SK-N-SH (cell line): ENCODE measurements at regions of chr9 and their contacts with region 1.

Region 1: DNA sequence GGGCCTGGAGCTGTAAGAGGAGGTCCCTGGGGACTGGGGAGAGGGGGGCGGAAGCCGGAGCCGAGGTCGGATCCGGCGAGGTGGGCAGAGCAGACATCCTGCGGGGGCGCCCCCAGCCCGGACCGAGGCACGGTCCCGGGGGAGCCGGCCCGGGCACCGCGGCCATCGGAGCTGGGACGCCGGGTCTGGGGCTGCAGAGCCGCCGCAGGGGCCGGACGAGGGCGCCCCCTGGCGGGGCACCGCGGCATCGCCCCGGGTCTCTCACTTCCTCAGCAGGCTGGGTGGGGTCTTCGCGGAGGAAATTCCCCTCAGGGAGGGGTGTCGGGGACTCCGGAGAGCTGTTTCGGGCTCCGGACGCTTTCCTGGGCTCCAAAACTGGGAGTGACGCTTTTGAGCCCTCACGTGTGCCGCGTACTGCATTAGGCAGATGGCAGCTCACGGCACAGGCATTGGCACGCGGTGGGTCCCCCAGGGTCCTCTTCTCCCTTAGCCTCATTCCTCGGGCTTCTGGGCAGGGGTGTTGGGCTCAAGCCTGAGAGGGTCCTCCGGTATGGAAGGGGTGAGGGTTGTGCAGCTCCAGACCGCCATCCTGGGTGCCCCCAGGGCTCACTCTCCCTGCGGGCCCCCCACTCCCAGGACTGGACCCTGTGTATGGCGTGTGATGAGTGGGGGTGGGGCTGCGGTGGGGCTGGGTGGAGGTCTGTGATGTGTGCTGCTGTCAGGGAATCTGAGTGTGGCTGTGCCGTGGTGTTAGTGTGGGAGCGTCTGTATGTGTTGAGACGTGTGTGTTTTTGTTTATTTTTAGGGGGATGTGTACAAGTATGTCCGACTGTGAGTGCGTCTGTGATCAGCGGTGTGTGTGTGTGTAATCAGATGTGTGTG is 29.6 kb downstream of the LHX2 start:
- DNase-seq: peak; percentile 93
- H3K4me3 ChIP-seq: peak overlapping the region; percentile 39 to 62
- H3K27ac ChIP-seq: no peak overlapping the region
- H3K4me1 ChIP-seq: peaks cover 0 to 10% of the 10 kb centered on the region in 2 experiments; a peak in 1 of 4 replicates
- H3K27me3 ChIP-seq: peaks cover 34% of the 10 kb centered on the region; the same call in 1 of the 2 replicates
- CTCF ChIP-seq: peak; percentile 93
- EP300 ChIP-seq: no peak
- RAD21 ChIP-seq: peak; percentile 64

Region 2: DNA sequence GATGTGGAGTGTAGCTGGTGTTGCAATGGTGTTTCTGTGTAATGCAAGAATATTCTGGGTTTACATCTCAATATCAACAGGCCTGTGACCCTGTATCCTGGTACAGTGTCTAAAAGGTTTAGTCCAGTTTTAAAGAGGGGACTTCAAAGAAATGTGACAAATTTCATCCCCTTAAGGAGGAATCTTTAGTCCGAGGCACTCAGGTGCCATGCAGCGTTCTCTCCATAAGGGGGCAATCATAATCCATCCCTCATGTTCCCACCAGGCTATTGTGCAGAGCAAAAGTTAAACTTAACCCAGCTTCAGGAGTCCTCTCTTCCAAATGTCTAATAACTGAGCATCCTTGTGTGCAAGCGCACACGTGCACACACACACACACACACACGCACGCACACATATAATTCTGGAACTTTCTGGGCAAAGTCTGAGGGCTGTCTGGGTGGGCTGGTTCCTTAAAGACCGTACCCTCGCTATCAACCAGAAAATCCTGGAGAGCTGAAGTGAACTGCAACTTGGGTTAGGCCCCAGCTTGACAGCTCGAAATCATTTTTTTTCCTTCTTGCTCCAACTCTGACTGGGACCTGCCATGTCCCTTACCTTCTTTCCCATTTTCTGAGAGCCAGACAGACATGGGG is 639.2 kb before region 1 on chr9:
- CTCF ChIA-PET with region 1: interaction called, 23 read pairs
- POLR2A ChIA-PET with region 1: no interaction called
- DNase-seq: peak; percentile 81
- H3K4me3 ChIP-seq: peak overlapping the region in 1 of 2 experiments; percentile 30; a peak in 1 of 4 replicates
- H3K27ac ChIP-seq: no peak overlapping the region
- H3K4me1 ChIP-seq: peaks cover 0 to 6% of the 10 kb centered on the region in 2 experiments; a peak in 1 of 4 replicates
- H3K27me3 ChIP-seq: no peaks in the 10 kb centered on the region
- CTCF ChIP-seq: peak; percentile 78
- EP300 ChIP-seq: no peak
- RAD21 ChIP-seq: peak; percentile 92

Region 3: GRCh38 chr9:123828449-123828848 is 212.7 kb before region 1 on chr9:
- CTCF ChIA-PET with region 1: no interaction called
- POLR2A ChIA-PET with region 1: no interaction called
- DNase-seq: peak; percentile 11
- H3K4me3 ChIP-seq: no peak overlapping the region
- H3K27ac ChIP-seq: no peak overlapping the region
- H3K4me1 ChIP-seq: no peaks in the 10 kb centered on the region
- H3K27me3 ChIP-seq: no peaks in the 10 kb centered on the region
- CTCF ChIP-seq: no peak
- EP300 ChIP-seq: no peak
- RAD21 ChIP-seq: no peak

Region 4: DNA sequence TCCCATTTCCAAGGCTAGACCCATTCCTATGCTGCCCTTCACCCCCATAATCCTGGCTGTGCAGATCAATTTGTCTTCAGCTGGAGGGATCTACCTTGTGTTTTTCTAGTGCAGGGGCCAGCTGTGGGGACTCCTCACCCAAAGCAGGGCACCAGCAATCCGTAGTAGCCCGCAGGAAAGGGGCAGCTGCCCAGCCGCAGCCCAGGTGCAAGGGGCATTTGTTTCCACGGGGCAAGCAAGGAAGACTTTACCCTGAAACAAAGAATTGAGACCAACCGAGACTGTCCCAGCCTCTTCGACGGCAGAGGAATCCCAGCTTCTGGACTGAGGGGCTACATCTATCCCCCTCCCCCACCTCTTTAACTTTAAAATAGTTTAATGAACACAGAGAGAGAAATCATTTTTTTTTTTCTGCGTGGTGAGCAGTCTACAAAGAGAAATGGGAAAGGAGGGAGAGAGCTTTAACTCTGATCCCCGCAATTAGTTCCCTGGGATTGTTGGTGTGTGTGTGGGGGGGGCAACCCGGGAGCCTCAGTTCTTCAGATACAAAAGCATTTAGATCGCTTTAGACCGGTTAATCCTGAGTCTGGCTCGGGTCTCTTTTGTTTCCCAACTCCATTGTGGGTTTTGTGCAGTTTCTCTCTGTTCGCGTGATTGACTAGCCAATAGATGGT is 40.3 kb before region 1 on chr9:
- CTCF ChIA-PET with region 1: interaction called, 33 read pairs
- POLR2A ChIA-PET with region 1: no interaction called
- DNase-seq: no peak
- H3K4me3 ChIP-seq: no peak overlapping the region
- H3K27ac ChIP-seq: no peak overlapping the region
- H3K4me1 ChIP-seq: peaks cover 0 to 2% of the 10 kb centered on the region in 2 experiments; a peak in 1 of 4 replicates
- H3K27me3 ChIP-seq: peaks cover 91% of the 10 kb centered on the region
- CTCF ChIP-seq: no peak
- EP300 ChIP-seq: no peak
- RAD21 ChIP-seq: no peak

Region 5: DNA sequence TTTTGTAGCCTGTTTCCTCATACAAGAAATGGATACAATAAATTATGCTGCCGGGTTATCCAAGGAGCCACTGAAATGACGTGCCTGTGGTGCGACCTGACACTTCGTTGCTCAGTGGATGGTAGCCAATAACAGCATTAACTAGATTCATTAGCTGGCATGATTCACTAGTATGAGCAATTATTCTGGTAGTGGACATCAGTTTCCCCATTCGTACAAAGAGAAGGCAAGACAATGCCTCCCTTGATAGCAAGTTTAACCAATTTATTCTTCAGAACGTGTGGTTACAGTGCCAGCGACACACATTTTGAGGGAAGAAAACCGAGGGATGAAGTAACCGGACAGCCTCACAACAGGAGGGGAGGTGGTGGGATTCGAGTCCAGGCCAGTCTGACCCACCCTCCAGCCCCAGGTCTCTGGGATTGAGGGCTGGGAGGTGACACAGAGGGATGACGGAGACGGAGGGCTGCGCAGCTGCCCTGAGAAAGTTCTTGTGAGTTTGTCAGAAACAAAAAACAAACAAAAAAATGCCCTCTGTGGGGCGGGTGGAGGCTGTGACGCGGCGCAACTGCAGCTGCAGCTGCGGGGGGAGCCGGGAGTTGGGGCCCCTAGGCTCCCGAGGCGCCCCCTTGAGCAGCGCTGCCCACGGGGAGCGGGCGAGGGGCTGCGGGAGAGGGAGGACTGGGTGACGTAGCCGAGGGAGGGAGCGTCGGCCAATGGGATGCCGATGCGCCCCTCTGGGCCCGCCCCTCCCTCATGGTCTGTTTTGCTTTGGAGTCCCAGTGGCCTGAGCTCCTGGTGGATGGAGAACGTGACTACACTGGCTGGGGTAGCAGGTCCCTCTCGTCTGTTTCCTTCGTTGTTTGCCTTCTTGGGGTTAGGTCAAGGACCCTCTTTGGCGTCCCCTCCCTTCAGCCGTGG is 18.7 kb before region 1 on chr9:
- CTCF ChIA-PET with region 1: interaction called, 89 read pairs
- POLR2A ChIA-PET with region 1: no interaction called
- DNase-seq: peak; percentile 93
- H3K4me3 ChIP-seq: no peak overlapping the region
- H3K27ac ChIP-seq: no peak overlapping the region
- H3K4me1 ChIP-seq: no peaks in the 10 kb centered on the region; a peak in 1 of 4 replicates
- H3K27me3 ChIP-seq: peaks cover 91% of the 10 kb centered on the region
- CTCF ChIP-seq: no peak; the same call in 1 of the 2 replicates
- EP300 ChIP-seq: no peak
- RAD21 ChIP-seq: no peak

Region 6: GRCh38 chr9:124054582-124055227 is 13.5 kb after region 1 on chr9:
- CTCF ChIA-PET with region 1: interaction called, 47 read pairs
- POLR2A ChIA-PET with region 1: no interaction called
- DNase-seq: no peak
- H3K4me3 ChIP-seq: no peak overlapping the region
- H3K27ac ChIP-seq: no peak overlapping the region
- H3K4me1 ChIP-seq: no peaks in the 10 kb centered on the region
- H3K27me3 ChIP-seq: peaks cover 12% of the 10 kb centered on the region; the same call in 1 of the 2 replicates
- CTCF ChIP-seq: no peak
- EP300 ChIP-seq: no peak
- RAD21 ChIP-seq: no peak

Region 7: DNA sequence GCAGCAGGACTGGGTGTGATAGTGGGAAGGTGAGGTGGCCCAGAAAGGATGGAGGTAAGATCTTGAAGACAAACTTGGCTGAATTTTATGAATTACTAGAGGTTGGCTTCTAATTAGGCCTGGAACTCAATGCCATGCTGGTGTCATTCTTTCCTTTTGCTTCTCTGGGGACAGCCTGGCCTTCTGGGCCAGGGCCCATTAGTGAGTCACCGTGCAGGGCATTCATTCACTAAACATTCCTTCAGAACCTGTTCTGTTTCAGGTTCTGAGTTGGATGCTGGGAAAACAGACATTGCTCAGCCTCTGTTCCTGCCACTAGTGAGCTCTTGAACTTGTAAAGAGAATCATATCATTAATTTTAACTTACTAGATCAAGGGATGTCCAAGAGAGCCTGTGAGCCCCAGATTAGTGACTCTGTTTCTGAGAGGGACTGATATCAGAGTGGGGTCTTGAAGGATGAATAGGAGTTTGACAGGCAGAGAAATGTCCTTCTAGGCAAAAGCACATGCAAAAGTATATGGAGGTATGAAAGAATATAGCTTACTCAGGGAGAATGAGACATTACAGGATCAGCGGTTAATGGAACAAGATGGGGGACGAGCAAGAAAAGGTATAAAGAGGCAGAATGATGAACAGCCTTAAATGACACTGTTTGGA is 36.9 kb after region 1 on chr9:
- CTCF ChIA-PET with region 1: interaction called, 10 read pairs
- POLR2A ChIA-PET with region 1: no interaction called
- DNase-seq: no peak
- H3K4me3 ChIP-seq: no peak overlapping the region
- H3K27ac ChIP-seq: peak overlapping the region in 1 of 2 experiments; percentile 33; a peak in 1 of 4 replicates
- H3K4me1 ChIP-seq: no peaks in the 10 kb centered on the region
- H3K27me3 ChIP-seq: peaks cover 9% of the 10 kb centered on the region; the same call in 1 of the 2 replicates
- CTCF ChIP-seq: no peak
- EP300 ChIP-seq: 0 out of 4 replicates have a peak, but pooled peaks of 1 of the 2 experiments have one; percentile 8
- RAD21 ChIP-seq: no peak

Region 8: GRCh38 chr9:124164811-124165210 is 123.6 kb after region 1 on chr9:
- CTCF ChIA-PET with region 1: no interaction called
- POLR2A ChIA-PET with region 1: no interaction called
- DNase-seq: no peak
- H3K4me3 ChIP-seq: no peak overlapping the region
- H3K27ac ChIP-seq: no peak overlapping the region
- H3K4me1 ChIP-seq: no peaks in the 10 kb centered on the region
- H3K27me3 ChIP-seq: peaks cover 23% of the 10 kb centered on the region; the same call in 1 of the 2 replicates
- CTCF ChIP-seq: no peak
- EP300 ChIP-seq: no peak
- RAD21 ChIP-seq: no peak